ENCODE measurements at regions of chr12 and their contacts with region 1.

Region 1: GRCh38 chr12:79737875-79738718 is 47.3 kb upstream of the PAWR start:
- DNase-seq: peak in 3 of 6 donors; percentile 12 to 36 (median 24)
- ATAC-seq: peak; percentile 58 to 83 (median 71)
- H3K4me3 ChIP-seq: no peak overlapping the region
- H3K27ac ChIP-seq: no peak overlapping the region
- H3K4me1 ChIP-seq: peaks cover 0 to 5% (median 0%) of the 10 kb centered on the region in 3 donors
- H3K27me3 ChIP-seq: no peaks in the 10 kb centered on the region
- CTCF ChIP-seq: peak in 3 of 4 donors; percentile 29 to 46 (median 36)

Region 2: DNA sequence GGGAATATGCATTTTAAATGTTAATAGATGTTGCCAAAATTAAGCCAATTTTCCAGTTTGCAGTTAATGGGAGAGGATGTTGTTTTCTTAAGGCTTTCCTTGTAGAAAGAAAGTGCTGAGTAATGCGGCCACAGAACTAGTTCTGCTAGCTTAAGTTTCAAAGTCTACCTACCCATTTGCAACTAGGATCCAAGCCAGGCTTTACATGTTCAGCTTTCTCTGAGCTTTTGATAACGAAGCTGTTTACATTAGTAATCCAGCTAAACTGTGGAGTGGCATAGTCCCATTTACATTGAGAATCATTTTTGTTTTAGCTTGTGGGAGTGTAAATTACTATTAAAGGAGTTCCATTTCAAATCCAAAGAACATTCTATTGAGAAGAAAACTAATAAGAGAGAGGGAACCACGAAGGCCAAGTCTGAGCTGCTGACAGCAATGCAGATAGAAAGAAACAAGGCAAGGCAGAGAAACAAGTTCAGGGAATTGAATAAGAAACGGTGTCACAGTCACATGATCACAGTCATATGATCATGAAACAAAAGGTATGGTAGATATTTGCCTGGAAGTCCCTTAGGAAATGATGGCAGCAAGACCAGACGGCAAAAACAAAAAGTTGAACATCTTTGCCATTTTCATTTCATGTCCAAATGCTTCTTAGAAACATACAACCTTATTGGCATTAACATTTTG is 322.2 kb before region 1 on chr12:
- intact Hi-C with region 1: loop called in 1 of 3 experiments (anchors 10 kb)
- DNase-seq: peak in 1 of 6 donors; percentile 52
- ATAC-seq: peak; percentile 68 to 85 (median 83)
- H3K4me3 ChIP-seq: peak overlapping the region in 1 of 4 donors; percentile 6
- H3K27ac ChIP-seq: peak overlapping the region in 1 of 4 donors; percentile 34
- H3K4me1 ChIP-seq: peaks cover 0 to 24% (median 11%) of the 10 kb centered on the region in 3 donors
- H3K27me3 ChIP-seq: no peaks in the 10 kb centered on the region
- CTCF ChIP-seq: no peak

Region 3: GRCh38 chr12:79591988-79592387 is 146.1 kb before region 1 on chr12:
- intact Hi-C with region 1: no loop called
- DNase-seq: no peak
- ATAC-seq: no peak
- H3K4me3 ChIP-seq: no peak overlapping the region
- H3K27ac ChIP-seq: no peak overlapping the region
- H3K4me1 ChIP-seq: peaks cover 0 to 3% (median 0%) of the 10 kb centered on the region in 3 donors
- H3K27me3 ChIP-seq: no peaks in the 10 kb centered on the region
- CTCF ChIP-seq: no peak

Region 4: GRCh38 chr12:79645235-79645630 is 92.9 kb before region 1 on chr12:
- intact Hi-C with region 1: no loop called
- DNase-seq: no peak
- ATAC-seq: peak in 3 of 4 donors; percentile 30 to 40 (median 32)
- H3K4me3 ChIP-seq: no peak overlapping the region
- H3K27ac ChIP-seq: no peak overlapping the region
- H3K4me1 ChIP-seq: peaks cover 3 to 21% (median 13%) of the 10 kb centered on the region in 3 donors
- H3K27me3 ChIP-seq: no peaks in the 10 kb centered on the region
- CTCF ChIP-seq: no peak